Activated T-helper 2 cell treated with anti-CD3 and anti-CD28 coated beads, Interferon-gamma antibody, Interleukin-2, Interleukin-4, amounts not matched to agents 10 μg/mL and 5 μg/mL and 100 μg/mL, durations not matched to agents 14 hours and 24 hours and 36 hours (primary cell): ENCODE measurements at regions of chr6 and their contacts with region 1.

Region 1: DNA sequence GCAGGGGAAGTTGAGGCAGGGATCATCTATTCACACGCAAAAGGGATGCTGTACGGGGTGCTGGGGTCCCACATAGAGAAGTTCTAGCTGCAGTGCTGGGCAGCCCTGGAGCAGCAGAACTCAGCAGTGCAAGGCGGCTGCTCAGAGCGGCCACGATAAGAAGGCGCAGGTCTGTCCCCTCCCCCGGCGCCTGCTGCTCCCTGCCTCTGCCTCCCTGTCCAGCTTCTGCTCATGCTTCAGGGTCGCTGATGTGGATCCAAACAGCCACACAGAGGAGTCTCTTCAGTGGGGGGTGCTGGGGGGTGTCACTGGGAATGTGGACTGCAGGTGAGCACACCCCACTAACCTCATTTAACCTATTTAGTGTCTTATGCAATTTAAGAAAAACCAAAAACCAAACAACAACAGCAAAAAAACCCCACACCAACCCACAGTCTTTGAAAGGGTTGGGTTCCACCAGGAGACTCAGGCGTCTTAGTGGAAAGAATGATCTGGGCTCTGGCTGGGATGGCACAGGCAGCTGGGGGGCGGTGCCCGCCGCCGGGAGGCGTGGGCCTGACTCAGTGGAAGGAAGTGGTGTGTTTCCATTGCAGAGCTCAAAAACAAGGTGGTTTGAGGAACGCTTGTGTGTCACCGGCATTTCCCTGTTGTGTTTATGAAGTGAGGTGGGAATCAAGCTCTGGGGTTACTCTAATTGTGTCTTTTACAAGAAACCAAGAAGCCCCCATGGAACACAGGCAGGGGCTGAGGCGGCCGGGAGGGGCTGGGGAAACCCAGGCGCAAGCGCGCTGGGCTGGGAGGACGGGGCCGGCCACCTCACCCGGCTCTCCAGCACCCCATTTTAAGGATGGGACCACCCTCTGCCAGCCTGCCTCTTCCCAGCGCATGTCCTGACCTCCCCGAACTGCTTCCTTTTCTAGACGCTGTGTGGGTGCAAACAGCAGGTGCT is 55.1 kb downstream of the IRF4 start:
- DNase-seq: peak; percentile 88
- H3K4me3 Mint-ChIP-seq: peak overlapping the region; percentile 40
- H3K27ac Mint-ChIP-seq: peak overlapping the region; percentile 91
- H3K4me1 Mint-ChIP-seq: peaks cover 54% of the 10 kb centered on the region
- H3K27me3 Mint-ChIP-seq: no peaks in the 10 kb centered on the region

Region 2: GRCh38 chr6:399785-400534 is 46.7 kb before region 1 on chr6:
- intact Hi-C with region 1: loop called (anchors 5 kb)
- DNase-seq: peak; percentile 57
- H3K4me3 Mint-ChIP-seq: peak overlapping the region; percentile 72
- H3K27ac Mint-ChIP-seq: peak overlapping the region; percentile 78
- H3K4me1 Mint-ChIP-seq: peaks cover 86% of the 10 kb centered on the region
- H3K27me3 Mint-ChIP-seq: no peaks in the 10 kb centered on the region

Region 3: DNA sequence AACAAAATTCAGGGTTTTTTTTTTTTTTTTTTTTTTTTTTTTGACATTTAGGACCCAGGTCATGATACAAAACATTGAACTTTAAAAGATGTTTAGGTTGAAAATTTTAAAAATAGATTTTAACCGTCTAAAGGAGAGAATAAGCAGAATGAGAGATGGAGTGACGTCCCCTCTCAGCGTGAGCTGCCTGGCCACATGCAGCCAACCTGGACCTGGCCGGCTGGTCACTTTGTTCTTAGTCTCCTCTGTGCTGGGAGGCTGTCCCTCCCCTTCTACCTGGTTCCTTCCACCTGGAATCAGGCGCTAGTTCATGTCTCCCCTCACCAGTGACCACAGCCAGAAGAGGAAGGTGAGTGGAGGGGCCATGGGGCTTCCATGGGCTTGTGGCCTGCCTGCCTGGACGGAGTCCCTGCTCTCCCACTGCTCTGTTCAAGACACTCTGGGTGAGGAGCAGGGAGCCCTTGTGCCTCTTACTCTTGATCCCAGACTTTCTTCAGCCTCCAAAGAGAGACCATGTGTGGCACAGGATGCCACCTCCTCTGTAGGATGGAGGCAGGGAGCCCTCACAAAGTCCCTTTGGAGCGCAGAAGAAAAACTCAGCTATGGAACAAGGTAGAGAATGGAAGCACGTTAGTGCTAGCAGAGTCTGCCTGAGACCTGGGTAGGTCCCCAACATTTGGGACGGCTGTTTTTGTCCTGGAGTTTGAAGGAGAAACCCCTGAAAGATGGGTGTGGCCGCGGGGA is 23.5 kb before region 1 on chr6:
- intact Hi-C with region 1: no loop called
- DNase-seq: no peak
- H3K4me3 Mint-ChIP-seq: peak overlapping the region; percentile 18
- H3K27ac Mint-ChIP-seq: peak overlapping the region; percentile 91
- H3K4me1 Mint-ChIP-seq: peaks cover 37% of the 10 kb centered on the region
- H3K27me3 Mint-ChIP-seq: no peaks in the 10 kb centered on the region

Region 4: DNA sequence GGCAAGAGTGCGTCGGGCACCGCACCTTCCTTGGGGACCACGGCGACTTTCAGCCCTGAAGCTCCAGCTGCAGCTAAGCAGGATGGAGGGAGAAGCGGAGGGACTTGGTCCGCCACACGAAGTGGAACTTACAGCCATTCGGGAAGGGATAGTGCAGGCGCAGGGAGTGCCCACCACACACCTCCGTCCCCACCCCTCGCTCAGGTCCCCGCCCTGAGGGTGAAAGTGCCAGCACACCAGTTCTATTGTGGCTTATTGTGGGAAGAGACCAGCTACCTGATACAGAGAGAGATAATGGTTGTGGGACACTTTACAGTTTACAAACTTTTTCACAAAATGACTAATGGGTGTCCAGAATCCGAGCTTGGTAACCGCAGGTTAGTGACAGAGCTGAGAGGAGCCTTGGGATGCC is 21.0 kb after region 1 on chr6:
- intact Hi-C with region 1: loop called (anchors 2 kb)
- DNase-seq: no peak
- H3K4me3 Mint-ChIP-seq: no peak overlapping the region
- H3K27ac Mint-ChIP-seq: no peak overlapping the region
- H3K4me1 Mint-ChIP-seq: peaks cover 51% of the 10 kb centered on the region
- H3K27me3 Mint-ChIP-seq: peaks cover 10% of the 10 kb centered on the region

Region 5: GRCh38 chr6:474453-475185 is 27.9 kb after region 1 on chr6:
- intact Hi-C with region 1: loop called (anchors 2 kb)
- DNase-seq: peak; percentile 77
- H3K4me3 Mint-ChIP-seq: peak overlapping the region; percentile 71
- H3K27ac Mint-ChIP-seq: peak overlapping the region; percentile 83
- H3K4me1 Mint-ChIP-seq: peaks cover 67% of the 10 kb centered on the region
- H3K27me3 Mint-ChIP-seq: no peaks in the 10 kb centered on the region

Region 6: DNA sequence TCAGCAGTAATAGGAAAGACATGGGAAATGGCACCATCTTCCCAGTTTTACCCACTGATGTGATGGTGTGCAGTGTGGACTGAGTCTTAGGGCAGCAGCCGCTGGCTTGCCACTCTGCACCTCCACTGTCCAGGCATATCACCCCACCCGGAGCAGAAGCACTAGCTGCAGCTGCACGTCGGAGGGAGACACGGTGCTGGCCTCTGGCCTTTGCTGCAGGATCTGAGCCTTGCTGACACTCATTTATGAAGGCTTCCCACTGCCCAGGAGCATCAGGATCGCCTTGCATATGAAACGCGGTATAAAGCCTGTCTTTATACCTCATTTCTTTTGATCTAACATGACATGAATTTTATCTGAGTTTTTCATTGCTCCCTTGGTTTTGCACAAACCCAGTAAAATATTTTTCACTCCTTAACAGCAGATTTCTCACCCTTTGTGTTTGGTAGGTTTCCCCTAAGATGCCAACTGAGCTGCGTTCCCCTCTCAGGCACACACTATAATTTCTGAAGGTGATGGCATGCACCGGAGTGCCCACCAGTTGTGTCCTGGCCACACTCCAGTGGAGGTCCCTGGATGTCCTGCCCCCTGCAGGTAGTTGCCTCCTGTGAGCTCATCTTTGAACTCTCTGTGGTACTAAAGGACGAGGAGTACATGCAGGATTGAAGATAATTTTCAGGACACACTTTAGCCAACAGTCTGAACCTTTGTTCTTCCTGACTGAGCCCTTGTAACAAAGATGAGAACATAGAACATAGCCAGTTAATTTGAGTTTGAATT is 255.2 kb after region 1 on chr6:
- intact Hi-C with region 1: no loop called
- DNase-seq: no peak
- H3K4me3 Mint-ChIP-seq: no peak overlapping the region
- H3K27ac Mint-ChIP-seq: no peak overlapping the region
- H3K4me1 Mint-ChIP-seq: peaks cover 5% of the 10 kb centered on the region
- H3K27me3 Mint-ChIP-seq: peaks cover 19% of the 10 kb centered on the region

Region 7: GRCh38 chr6:811831-812230 is 365.1 kb after region 1 on chr6:
- intact Hi-C with region 1: no loop called
- DNase-seq: no peak
- H3K4me3 Mint-ChIP-seq: no peak overlapping the region
- H3K27ac Mint-ChIP-seq: no peak overlapping the region
- H3K4me1 Mint-ChIP-seq: peaks cover 7% of the 10 kb centered on the region
- H3K27me3 Mint-ChIP-seq: peaks cover 1% of the 10 kb centered on the region